ENCODE measurements at regions of chr22 and their contacts with region 1.

Region 1: GRCh38 chr22:39080052-39080762 is 3.1 kb downstream of the APOBEC3G start:
- DNase-seq: no peak
- ATAC-seq: peak; percentile 20
- H3K4me3 ChIP-seq: peak overlapping the region; percentile 6
- H3K4me3 Mint-ChIP-seq: peak overlapping the region in 3 of 10 donors; percentile 19 to 47 (median 40)
- H3K27ac ChIP-seq: no peak overlapping the region
- H3K27ac Mint-ChIP-seq: peak overlapping the region in 3 of 9 donors; percentile 25 to 43 (median 36)
- H3K4me1 ChIP-seq: peaks cover 4 to 47% of the 10 kb centered on the region in 2 donors
- H3K4me1 Mint-ChIP-seq: peaks cover 23 to 58% (median 36%) of the 10 kb centered on the region in 7 donors
- H3K27me3 ChIP-seq: no peaks in the 10 kb centered on the region
- H3K27me3 Mint-ChIP-seq: no peaks in the 10 kb centered on the region

Region 2: GRCh38 chr22:39013942-39014722 is 66.1 kb before region 1 on chr22 and contains the start of gene APOBEC3C:
- CTCF ChIA-PET with region 1: no interaction called
- POLR2A ChIA-PET with region 1: interaction called, 3 read pairs
- intact Hi-C with region 1: loop called in 1 of 2 experiments (anchors 5 kb)
- DNase-seq: peak; percentile 28 to 78 (median 59)
- ATAC-seq: peak; percentile 95
- H3K4me3 ChIP-seq: peak within 1 kb of the TSS; percentile 81
- H3K4me3 Mint-ChIP-seq: peak within 1 kb of the TSS; percentile 88 to 99 (median 94)
- H3K27ac ChIP-seq: peak within 1 kb of the TSS; percentile 87
- H3K27ac Mint-ChIP-seq: peak within 1 kb of the TSS; percentile 82 to 98 (median 95)
- H3K4me1 ChIP-seq: peaks cover 9 to 10% of the 10 kb centered on the region in 2 donors
- H3K4me1 Mint-ChIP-seq: peaks cover 12 to 51% (median 37%) of the 10 kb centered on the region in 7 donors
- H3K27me3 ChIP-seq: no peaks in the 10 kb centered on the region
- H3K27me3 Mint-ChIP-seq: no peaks in the 10 kb centered on the region
- total RNA-seq, gene APOBEC3C: 16.4 to 102 (median 20.5) TPM

Region 3: DNA sequence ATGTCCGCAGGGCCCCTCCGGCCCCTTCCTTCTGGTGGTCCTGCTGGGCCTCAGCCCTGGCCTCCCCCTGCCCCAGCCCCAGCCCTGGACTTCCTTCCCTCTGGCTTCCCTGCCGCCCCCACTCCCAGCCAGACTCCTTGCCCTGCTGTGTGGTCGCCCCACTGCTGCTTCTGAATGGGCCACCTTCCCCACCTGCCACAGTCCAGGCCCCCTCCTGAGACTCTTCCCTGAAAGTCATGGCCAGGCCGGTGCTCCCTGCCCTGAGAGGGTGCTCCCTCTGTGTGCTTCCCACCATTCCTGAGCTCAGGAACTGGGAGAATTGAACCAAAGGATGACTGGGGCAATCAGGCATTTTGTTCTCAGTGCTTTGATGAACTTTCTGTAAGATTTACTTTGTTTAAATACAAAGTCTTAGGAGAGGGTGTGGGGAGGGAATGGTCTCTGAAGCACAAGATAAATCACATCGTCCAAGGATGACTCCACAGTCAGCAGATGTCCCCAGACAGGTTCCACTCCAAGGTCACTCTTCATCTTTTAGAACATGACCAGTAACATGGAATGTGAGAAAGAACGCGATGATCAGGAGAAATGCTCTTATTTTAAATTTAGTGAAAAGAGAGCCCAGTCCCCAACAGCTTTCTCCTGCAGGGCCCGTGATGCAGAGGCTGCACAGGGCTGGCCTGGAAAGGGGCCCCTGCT is 58.5 kb before region 1 on chr22:
- CTCF ChIA-PET with region 1: no interaction called
- POLR2A ChIA-PET with region 1: interaction called, 3 read pairs
- intact Hi-C with region 1: loop called in 1 of 2 experiments (anchors 5 kb)
- DNase-seq: peak in 1 of 9 donors; percentile 18
- ATAC-seq: no peak
- H3K4me3 ChIP-seq: peak overlapping the region; percentile 76
- H3K4me3 Mint-ChIP-seq: peak overlapping the region; percentile 91 to 98 (median 94)
- H3K27ac ChIP-seq: peak overlapping the region; percentile 86
- H3K27ac Mint-ChIP-seq: peak overlapping the region; percentile 88 to 98 (median 96)
- H3K4me1 ChIP-seq: peaks cover 18 to 24% of the 10 kb centered on the region in 2 donors
- H3K4me1 Mint-ChIP-seq: peaks cover 29 to 73% (median 54%) of the 10 kb centered on the region in 7 donors
- H3K27me3 ChIP-seq: no peaks in the 10 kb centered on the region
- H3K27me3 Mint-ChIP-seq: no peaks in the 10 kb centered on the region

Region 4: GRCh38 chr22:39039306-39040126 is 40.7 kb before region 1 on chr22:
- CTCF ChIA-PET with region 1: no interaction called
- POLR2A ChIA-PET with region 1: no interaction called
- intact Hi-C with region 1: loop called in 1 of 2 experiments (anchors 5 kb)
- DNase-seq: no peak
- ATAC-seq: no peak
- H3K4me3 ChIP-seq: no peak overlapping the region
- H3K4me3 Mint-ChIP-seq: peak overlapping the region; percentile 63 to 88 (median 79)
- H3K27ac ChIP-seq: peak overlapping the region; percentile 77
- H3K27ac Mint-ChIP-seq: peak overlapping the region; percentile 62 to 93 (median 82)
- H3K4me1 ChIP-seq: peaks cover 8 to 18% of the 10 kb centered on the region in 2 donors
- H3K4me1 Mint-ChIP-seq: peaks cover 24 to 48% (median 39%) of the 10 kb centered on the region in 7 donors
- H3K27me3 ChIP-seq: no peaks in the 10 kb centered on the region
- H3K27me3 Mint-ChIP-seq: no peaks in the 10 kb centered on the region

Region 5: GRCh38 chr22:39117585-39118191 is 37.5 kb after region 1 on chr22:
- CTCF ChIA-PET with region 1: interaction called, 3 read pairs
- POLR2A ChIA-PET with region 1: no interaction called
- intact Hi-C with region 1: loop called in 1 of 2 experiments (anchors 5 kb)
- DNase-seq: peak in 8 of 9 donors; percentile 46 to 69 (median 62)
- ATAC-seq: peak; percentile 77
- H3K4me3 ChIP-seq: no peak overlapping the region
- H3K4me3 Mint-ChIP-seq: peak overlapping the region in 2 of 10 donors; percentile 40 to 47
- H3K27ac ChIP-seq: no peak overlapping the region
- H3K27ac Mint-ChIP-seq: peak overlapping the region in 5 of 9 donors; percentile 3 to 73 (median 59)
- H3K4me1 ChIP-seq: peaks cover 6 to 28% of the 10 kb centered on the region in 2 donors
- H3K4me1 Mint-ChIP-seq: peaks cover 7 to 42% (median 18%) of the 10 kb centered on the region in 7 donors
- H3K27me3 ChIP-seq: no peaks in the 10 kb centered on the region
- H3K27me3 Mint-ChIP-seq: no peaks in the 10 kb centered on the region

Measured in naive thymus-derived CD4-positive, alpha-beta T cell (primary cell).